ENCODE measurements at regions of chr11 and their contacts with region 1.

Region 1: DNA sequence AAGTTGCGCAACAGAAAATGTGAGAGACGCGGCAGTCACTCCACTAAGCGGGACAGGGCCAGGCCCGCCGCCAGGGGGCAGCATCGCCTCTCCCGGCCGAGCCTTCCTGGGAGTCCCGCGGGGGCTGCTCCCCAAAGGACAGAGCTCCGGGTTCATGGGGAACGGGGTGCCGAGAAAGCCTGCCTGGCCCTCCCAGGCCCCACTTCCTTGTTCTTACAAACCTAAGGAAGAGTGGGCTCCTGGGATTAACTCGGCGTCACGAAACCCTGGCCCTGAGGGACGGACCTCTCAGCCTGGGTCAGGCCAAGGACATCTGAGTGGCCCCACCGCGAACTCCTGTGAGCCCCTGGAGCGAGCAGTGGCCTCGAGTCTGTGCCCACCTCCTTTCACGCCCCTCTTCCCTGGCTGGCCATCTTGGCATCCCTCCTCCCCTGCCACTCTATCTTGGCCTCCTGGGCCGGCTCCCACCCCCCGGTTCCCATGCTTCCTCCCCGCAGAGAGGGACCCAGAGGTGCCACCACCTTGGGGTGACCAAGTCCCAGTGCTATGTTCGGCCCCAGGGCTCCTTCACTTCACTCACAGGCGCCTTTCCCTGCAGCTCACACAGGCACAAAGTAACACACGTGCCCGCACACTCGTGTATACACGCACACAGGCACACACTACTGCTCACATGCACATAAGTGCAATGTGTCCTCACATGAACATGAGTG is 99.9 kb upstream of the FGF3 start:
- DNase-seq: peak; percentile 93
- H3K4me3 ChIP-seq: no peak overlapping the region
- H3K27ac ChIP-seq: no peak overlapping the region
- H3K4me1 ChIP-seq: peaks cover 6% of the 10 kb centered on the region
- H3K27me3 ChIP-seq: peaks cover 3% of the 10 kb centered on the region
- CTCF ChIP-seq: peak; percentile 99

Region 2: DNA sequence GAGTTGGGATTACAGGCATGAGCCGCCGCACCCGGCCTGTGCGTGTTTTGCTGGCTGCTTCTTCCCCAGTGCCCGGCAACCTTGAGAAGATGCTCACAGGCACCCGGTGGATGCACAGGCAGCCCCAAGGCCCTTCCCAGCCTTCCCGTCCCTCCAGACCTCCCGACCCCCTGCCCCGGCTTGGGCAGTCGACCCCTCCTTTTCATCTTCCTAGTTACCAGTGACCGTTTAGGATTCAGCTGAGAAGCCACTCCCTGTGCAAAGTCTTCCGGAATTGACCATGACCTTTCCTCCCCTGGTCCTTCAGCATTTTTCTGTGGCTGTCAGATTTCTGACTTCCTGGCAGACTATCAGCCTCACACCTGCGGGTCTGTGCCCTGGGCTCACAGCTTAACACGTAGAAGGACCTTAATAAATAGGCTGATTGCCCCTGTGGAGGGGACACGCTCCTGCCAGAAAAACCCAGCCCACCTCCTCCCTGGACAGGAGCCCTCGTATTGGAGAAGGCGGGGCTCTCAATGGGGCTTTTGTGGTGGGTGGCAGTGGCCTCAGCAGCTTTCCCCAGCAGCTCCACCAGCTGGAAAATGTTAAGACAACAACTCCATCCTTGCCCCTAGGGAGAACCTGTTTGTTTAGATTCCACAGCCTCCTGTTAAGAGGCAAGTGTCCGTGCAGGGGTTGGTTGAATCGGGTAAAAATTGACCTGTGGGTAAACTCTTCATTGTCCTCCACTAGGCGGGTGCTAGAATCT is 148.7 kb after region 1 on chr11:
- CTCF ChIA-PET with region 1: interaction called, 13 read pairs
- POLR2A ChIA-PET with region 1: no interaction called
- intact Hi-C with region 1: no loop called
- DNase-seq: no peak
- H3K4me3 ChIP-seq: no peak overlapping the region
- H3K27ac ChIP-seq: no peak overlapping the region
- H3K4me1 ChIP-seq: no peaks in the 10 kb centered on the region
- H3K27me3 ChIP-seq: peaks cover 21% of the 10 kb centered on the region
- CTCF ChIP-seq: no peak

Region 3: DNA sequence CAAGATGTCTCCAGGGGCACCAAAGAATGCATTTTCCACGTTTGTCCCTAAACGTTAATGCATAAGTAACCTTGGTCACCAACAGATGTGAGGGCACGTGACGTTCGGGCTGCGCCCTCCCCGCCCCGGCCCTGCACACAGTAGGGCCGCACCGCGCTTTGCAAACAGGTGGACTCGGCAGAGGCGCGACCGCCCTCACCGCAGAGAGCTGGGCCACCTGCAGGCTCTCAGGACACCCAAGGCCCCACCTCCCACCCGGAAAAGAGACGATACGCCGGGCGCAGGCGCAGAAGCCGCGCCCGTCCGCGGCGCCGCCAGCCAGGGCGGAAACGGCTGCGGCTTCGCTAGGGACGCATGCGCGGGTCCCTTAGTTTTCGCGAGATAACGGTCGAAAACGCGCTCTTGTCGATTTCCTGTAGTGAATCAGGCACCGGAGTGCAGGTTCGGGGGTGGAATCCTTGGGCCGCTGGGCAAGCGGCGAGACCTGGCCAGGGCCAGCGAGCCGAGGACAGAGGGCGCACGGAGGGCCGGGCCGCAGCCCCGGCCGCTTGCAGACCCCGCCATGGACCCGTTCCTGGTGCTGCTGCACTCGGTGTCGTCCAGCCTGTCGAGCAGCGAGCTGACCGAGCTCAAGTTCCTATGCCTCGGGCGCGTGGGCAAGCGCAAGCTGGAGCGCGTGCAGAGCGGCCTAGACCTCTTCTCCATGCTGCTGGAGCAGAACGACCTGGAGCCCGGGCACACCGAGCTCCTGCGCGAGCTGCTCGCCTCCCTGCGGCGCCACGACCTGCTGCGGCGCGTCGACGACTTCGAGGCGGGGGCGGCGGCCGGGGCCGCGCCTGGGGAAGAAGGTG is 284.0 kb after region 1 on chr11 and contains the start of gene FADD:
- CTCF ChIA-PET with region 1: interaction called, 10 read pairs
- POLR2A ChIA-PET with region 1: no interaction called
- intact Hi-C with region 1: no loop called
- DNase-seq: peak; percentile 97
- H3K4me3 ChIP-seq: peak within 1 kb of the TSS; percentile 83
- H3K27ac ChIP-seq: peak within 1 kb of the TSS; percentile 93
- H3K4me1 ChIP-seq: peaks cover 10% of the 10 kb centered on the region
- H3K27me3 ChIP-seq: no peaks in the 10 kb centered on the region
- CTCF ChIP-seq: no peak
- total RNA-seq, gene FADD: 53.7 and 62.7 TPM in 2 replicates

Measured in A673 (cell line).